A549 (cell line): ENCODE measurements at regions of chr12 and their contacts with region 1.

Region 1: DNA sequence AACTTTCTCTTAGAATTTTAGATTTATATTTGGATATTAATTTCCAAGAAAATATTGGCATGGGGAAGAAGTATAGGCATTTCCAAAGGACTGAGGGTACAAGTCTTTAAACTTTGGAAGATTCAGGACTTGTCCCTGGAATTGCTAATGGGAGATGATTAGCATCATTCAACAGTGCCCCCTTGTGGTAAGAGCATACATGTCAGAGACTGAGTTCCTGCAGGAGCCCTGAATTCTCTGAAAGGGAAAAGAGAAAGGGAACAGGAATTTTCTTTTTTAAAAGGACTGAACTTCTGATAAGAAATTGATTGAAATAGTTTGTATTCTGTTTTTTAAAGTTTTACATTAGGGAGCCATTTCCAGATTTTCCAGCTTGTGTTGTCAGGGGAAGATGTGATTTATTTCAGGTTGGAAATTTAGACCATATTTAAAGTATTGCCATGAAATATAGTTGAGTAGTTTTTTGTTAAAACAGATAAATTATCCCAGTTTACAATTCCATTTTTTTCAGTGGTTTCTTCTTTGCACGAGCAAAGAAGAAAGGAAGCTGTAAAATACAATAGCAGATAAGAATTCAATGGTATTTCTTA is 44.0 kb upstream of the REP15 start:
- DNase-seq: peak; percentile 70 to 82
- ATAC-seq: peak; percentile 81 to 89; a peak in 5 of 6 replicates
- H3K4me3 ChIP-seq: no peak overlapping the region
- H3K27ac ChIP-seq: no peak overlapping the region
- H3K4me1 ChIP-seq: no peaks in the 10 kb centered on the region
- CTCF ChIP-seq: peak; percentile 93
- EP300 ChIP-seq: no peak
- POLR2A ChIP-seq: no peak
- RAD21 ChIP-seq: peak; percentile 86 to 88

Region 2: DNA sequence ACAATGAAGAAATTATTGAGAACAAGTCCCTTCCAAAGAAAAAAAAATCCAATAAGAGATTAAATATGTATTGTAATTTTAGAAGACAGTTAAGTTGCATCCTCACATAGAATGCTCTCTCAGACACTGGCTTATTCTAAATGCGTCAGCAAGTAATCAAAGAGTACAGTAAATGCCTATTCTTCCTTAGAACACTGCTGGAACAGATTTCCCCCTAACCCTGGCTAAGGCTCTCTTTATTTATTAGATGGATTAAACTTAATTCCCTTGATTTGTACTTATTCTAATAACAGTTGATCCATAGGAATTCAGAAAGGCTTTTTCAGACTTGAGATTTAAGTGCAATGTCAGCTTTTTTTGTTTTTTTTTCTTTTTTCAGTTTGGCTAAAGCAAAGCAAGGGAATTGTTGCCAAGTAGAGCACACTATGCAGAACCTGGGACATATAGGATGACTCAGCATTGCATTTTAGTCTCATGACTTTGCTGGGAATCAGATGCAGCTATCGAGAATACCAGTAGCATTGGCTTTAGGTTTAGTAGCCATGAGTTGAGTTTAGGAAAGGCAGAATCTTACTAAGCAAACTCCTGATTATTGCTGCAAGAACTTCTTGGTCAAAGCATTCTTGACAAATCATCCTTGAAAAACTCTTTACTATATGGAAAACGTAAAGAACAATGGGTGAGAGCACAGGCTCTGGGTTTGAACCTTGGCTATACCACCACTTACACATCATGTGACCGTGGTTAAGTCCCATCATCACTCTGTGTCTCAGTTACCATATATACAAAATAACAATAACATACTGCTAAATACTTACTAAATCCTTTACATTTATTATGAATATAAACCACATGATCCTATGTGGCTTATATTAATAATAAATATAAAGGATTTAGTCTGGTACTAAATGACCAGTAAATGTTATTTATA is 603.2 kb before region 1 on chr12:
- CTCF ChIA-PET with region 1: no interaction called
- POLR2A ChIA-PET with region 1: no interaction called
- DNase-seq: peak in 1 of 2 experiments; percentile 60
- ATAC-seq: peak in 1 of 2 experiments; percentile 57; a peak in 2 of 6 replicates
- H3K4me3 ChIP-seq: no peak overlapping the region
- H3K27ac ChIP-seq: peak overlapping the region; percentile 18 to 70; a peak in 3 of 6 replicates
- H3K4me1 ChIP-seq: peaks cover 9% of the 10 kb centered on the region
- CTCF ChIP-seq: no peak
- EP300 ChIP-seq: no peak
- POLR2A ChIP-seq: no peak
- RAD21 ChIP-seq: no peak

Region 3: DNA sequence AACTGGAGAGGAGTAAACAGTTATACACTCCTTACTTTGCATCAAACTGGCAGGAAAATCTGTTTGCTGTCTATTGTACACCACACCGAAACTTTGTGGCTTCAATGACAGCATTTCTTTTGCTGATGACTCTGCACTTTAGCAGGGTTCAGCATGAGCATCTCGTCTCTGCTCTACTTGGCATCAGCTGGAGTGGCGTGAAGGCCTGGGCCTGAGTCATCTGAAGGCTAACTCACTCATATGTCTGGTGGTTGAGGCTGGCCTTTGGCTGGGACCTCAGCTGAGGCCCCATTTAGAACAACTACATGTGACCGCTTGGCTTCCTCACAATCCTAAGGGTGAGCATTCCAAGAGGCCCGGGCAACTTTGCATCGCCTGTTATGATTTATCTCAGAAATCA is 15.3 kb after region 1 on chr12:
- CTCF ChIA-PET with region 1: interaction called, 27 read pairs
- POLR2A ChIA-PET with region 1: no interaction called
- DNase-seq: no peak
- ATAC-seq: no peak
- H3K4me3 ChIP-seq: no peak overlapping the region
- H3K27ac ChIP-seq: no peak overlapping the region
- H3K4me1 ChIP-seq: no peaks in the 10 kb centered on the region
- CTCF ChIP-seq: no peak
- EP300 ChIP-seq: no peak
- POLR2A ChIP-seq: no peak
- RAD21 ChIP-seq: no peak